ENCODE measurements at regions of chr18 and their contacts with region 1.

Region 1: GRCh38 chr18:12726774-12727550 is 24.1 kb downstream of the PSMG2 start:
- DNase-seq: peak; percentile 50 to 73
- ATAC-seq: peak; percentile 87
- H3K4me3 ChIP-seq: no peak overlapping the region
- H3K27ac ChIP-seq: peak overlapping the region in 1 of 2 experiments; percentile 74; a peak in 3 of 6 replicates
- H3K4me1 ChIP-seq: no peaks in the 10 kb centered on the region
- CTCF ChIP-seq: peak; percentile 79
- EP300 ChIP-seq: no peak
- POLR2A ChIP-seq: no peak
- RAD21 ChIP-seq: peak; percentile 85 to 86

Region 2: DNA sequence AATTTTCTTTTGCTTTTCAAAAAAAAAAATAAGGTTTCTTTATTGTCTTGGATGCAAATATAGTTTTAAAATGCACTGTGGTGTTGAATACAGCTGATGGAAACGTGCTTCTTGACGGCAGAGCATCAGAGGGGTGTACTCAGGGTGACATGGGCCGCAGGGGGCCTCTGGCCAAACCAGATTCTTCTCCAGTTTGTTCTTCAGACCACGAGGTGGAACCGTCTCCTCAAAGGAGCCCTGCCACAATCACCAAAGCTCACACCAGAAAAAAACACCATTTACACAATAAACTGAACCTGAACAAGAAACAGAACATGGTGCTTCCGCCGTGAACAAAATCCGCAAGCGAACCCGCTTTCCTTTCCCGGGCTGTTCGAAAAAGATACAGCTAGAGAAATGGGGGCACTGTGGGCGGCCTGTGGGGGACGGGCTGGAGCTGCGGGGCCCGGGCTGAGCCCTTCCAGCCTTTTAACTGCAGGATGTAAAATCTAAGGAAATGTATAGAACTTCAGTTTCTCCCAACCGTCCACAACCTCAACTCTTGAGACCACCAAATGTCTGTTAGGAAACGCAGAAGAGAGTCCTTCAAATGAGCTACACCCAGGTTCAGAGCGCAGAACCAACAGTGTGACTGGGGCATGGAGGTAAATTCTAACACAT is 10.4 kb after region 1 on chr18:
- CTCF ChIA-PET with region 1: interaction called, 83 read pairs
- POLR2A ChIA-PET with region 1: interaction called, 3 read pairs
- DNase-seq: no peak
- ATAC-seq: no peak
- H3K4me3 ChIP-seq: no peak overlapping the region
- H3K27ac ChIP-seq: peak overlapping the region in 1 of 2 experiments; percentile 67; a peak in 3 of 6 replicates
- H3K4me1 ChIP-seq: peaks cover 18% of the 10 kb centered on the region
- CTCF ChIP-seq: no peak
- EP300 ChIP-seq: no peak
- POLR2A ChIP-seq: no peak
- RAD21 ChIP-seq: peak in 1 of 2 experiments; percentile 21; a peak in 1 of 5 replicates

Region 3: DNA sequence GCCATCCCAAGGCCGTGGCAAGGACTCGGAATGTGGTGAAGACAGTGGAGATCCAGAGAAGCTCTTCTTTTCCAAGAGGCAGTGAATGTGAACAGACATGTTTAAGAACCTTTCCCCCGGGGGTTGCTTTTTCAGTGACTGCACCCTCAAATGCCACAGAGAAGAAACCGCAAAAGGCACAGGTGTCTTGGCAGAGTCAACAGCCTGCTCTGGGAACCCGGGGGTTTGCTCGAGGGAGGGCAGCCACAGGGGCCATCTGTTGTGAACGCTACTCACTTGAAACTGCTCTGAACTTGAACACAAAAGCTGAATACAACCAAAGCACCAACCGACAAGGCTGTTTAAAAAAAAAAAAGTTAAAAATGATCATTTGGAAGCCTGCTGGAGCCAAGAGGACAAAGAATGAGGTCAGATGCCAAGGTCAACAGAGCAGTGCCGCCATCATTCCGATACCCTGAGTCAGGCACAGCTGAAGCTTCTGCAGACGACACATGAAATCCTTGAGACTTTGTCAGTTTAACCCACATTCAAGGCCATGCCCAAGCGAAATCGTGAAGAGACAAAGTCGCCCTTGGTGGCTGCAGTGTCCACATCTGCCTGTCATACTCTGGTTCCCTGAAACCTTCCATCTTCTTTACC is 23.2 kb after region 1 on chr18:
- CTCF ChIA-PET with region 1: interaction called, 83 read pairs
- POLR2A ChIA-PET with region 1: no interaction called
- DNase-seq: no peak
- ATAC-seq: no peak
- H3K4me3 ChIP-seq: no peak overlapping the region
- H3K27ac ChIP-seq: no peak overlapping the region
- H3K4me1 ChIP-seq: no peaks in the 10 kb centered on the region
- CTCF ChIP-seq: no peak
- EP300 ChIP-seq: no peak
- POLR2A ChIP-seq: no peak
- RAD21 ChIP-seq: no peak

Region 4: DNA sequence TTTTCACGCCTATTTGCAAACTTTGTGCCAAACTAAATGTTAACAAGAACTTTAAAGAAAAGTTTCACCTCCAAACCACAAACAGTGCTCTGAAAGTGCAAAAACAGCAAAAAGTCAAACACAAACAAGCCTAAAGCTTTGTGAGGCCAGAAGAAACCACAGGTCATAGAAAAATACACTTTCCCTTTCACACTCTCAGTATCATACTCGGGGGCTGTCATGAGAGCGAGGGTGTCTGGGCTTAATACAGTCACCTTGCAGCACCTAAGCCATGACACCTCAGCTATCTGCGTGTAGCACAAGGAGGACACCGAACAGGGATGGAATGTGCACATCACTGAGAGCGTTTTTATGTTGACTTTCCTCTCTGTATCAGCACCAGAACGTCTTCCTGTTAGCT is 194.2 kb after region 1 on chr18:
- CTCF ChIA-PET with region 1: interaction called, 11 read pairs
- POLR2A ChIA-PET with region 1: no interaction called
- DNase-seq: no peak
- ATAC-seq: no peak
- H3K4me3 ChIP-seq: no peak overlapping the region
- H3K27ac ChIP-seq: no peak overlapping the region
- H3K4me1 ChIP-seq: no peaks in the 10 kb centered on the region
- CTCF ChIP-seq: no peak
- EP300 ChIP-seq: no peak
- POLR2A ChIP-seq: no peak
- RAD21 ChIP-seq: no peak